ENCODE measurements at regions of chr1 and their contacts with region 1.

Region 1: GRCh38 chr1:219812491-219813203 is 115.7 kb downstream of the SLC30A10 start:
- DNase-seq: peak; percentile 17
- H3K4me3 ChIP-seq: no peak overlapping the region
- CTCF ChIP-seq: peak; percentile 76

Region 2: GRCh38 chr1:219566951-219567947 is 245.4 kb before region 1 on chr1:
- CTCF ChIA-PET with region 1: interaction called, 10 read pairs
- POLR2A ChIA-PET with region 1: no interaction called
- DNase-seq: no peak
- H3K4me3 ChIP-seq: no peak overlapping the region
- CTCF ChIP-seq: peak; percentile 62

Region 3: DNA sequence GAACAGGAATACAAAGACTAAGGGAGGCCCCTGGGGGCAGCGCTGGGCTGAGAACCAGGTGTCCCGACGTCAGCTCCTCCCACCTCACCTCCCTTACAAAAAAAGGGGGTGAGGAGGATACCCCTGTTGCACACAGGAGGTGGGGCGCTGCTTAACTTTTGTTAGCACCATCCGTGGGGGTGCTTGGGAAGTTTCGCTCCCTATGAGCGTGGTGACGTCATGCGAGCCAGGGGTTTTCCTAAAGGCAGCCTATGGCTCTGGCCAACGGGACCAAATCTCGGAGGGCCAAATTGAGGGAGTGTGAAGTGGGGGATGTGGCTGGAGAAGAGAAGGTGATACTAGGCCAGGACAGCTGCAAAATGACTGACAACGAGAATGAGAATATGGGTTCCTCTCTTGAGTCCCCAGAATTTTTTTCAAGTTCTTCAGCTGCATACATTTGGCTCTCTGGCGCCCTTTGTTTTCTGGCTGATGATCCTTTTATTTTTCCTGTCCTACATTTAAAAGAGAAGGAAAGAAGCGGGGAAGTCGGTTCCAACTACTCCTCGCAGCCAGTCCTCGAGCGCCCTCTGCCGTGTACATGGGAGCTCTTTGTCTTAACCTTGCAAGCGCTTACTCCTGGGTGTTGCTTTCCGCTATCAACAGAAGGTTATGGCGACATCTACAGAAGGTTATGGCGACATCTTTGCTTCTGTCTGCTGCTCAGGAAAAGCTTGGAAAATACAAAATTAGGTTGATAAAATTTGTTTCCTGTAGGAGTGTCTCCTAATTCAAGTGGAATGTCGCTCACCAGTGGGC is 151.8 kb before region 1 on chr1:
- CTCF ChIA-PET with region 1: interaction called, 10 read pairs
- POLR2A ChIA-PET with region 1: no interaction called
- DNase-seq: peak; percentile 47
- H3K4me3 ChIP-seq: peak overlapping the region; percentile 26
- CTCF ChIP-seq: peak; percentile 82

Region 4: GRCh38 chr1:219782311-219782710 is 30.3 kb before region 1 on chr1:
- CTCF ChIA-PET with region 1: no interaction called
- POLR2A ChIA-PET with region 1: no interaction called
- DNase-seq: no peak
- H3K4me3 ChIP-seq: no peak overlapping the region
- CTCF ChIP-seq: no peak

Region 5: DNA sequence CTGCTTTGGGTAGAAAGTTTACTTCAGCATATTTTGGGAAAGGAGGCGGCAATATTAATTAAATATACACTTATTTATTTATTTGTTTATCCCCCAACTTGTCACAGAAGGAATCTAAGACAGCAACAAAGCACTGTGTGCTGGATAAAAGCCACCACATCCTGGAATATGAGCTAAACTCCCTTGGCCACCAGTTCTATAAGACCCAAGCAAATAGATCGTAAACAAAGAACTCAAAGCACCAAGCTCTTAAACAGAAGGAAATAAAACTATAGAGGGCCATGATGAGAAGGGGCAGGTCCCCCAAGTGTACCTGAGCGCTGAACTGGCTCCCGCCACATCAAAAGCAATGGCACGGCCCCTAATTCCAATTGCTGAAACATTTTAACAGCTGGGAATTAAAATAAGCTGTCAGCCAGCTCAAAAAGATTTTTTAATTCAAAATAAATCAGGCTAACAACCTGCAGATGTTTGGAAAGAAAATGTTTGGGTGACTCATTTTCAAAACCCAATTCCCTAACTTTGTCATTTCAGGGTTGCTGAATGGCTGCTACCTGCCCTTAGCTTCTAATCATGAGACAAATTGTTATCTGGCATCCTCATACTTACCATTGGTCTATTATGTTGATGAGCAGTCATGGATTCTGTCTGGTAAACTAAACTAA is 11.4 kb before region 1 on chr1:
- CTCF ChIA-PET with region 1: interaction called, 28 read pairs
- POLR2A ChIA-PET with region 1: no interaction called
- DNase-seq: no peak
- H3K4me3 ChIP-seq: no peak overlapping the region
- CTCF ChIP-seq: no peak

Region 6: DNA sequence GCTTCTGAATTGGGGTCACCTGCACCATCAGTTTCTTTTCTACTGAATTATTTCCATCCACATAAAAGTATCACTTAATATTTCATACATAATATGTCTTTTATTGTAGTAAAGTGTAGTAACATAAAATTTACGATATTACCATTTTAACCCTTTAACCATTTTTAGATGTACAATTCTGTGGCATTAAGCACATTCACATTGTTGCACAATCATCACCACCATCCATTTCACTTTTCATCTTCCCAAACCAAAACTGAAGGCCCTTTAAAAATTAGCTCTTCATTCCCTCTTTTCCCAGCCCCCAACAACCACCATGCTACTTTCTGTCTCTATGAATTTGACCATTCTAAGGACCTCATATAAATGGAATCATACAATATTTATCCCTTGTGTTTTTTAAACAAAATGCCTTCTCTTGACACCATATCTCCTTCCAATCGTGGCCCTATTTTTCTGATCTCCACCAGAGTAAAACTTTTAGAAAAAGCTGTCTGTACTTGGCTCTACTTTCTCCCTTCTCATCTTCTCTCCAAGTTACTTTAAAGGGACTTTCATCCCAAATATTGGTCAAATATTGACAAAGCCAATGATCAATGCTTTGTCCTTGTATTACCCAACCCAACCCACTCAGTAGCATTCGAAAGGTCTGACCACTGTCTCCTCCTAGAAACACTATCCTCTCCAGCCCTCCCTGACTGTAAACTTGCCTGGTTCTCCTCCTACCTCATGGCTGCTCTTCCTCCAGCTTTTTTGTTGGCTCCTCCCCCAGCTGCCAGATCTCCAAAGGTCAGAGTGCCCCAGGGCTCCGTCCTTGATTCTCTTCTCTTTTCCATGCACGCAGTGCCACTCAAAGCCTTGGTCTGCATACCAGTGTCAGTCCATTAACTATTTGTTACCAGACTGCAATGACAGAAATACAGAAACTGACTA is 71.0 kb after region 1 on chr1:
- CTCF ChIA-PET with region 1: no interaction called
- POLR2A ChIA-PET with region 1: no interaction called
- DNase-seq: no peak
- H3K4me3 ChIP-seq: no peak overlapping the region
- CTCF ChIP-seq: no peak